Left lung (tissue), 14 donors: ENCODE measurements at regions of chr15 and their contacts with region 1.

Region 1: GRCh38 chr15:83248151-83249029 is 36.1 kb downstream of the BNC1 start:
- DNase-seq: peak in 2 of 4 donors; percentile 56 to 67
- ATAC-seq: peak; percentile 84
- H3K4me3 ChIP-seq: no peak overlapping the region
- H3K27ac ChIP-seq: no peak overlapping the region
- H3K4me1 ChIP-seq: no peaks in the 10 kb centered on the region
- H3K27me3 ChIP-seq: peaks cover 15 to 55% of the 10 kb centered on the region in 2 donors
- CTCF ChIP-seq: peak; percentile 86 to 89

Region 2: GRCh38 chr15:83443076-83443847 is 194.9 kb after region 1 on chr15:
- intact Hi-C with region 1: loop called in 1 of 2 experiments (anchors 5 kb)
- DNase-seq: no peak
- ATAC-seq: no peak
- H3K4me3 ChIP-seq: no peak overlapping the region
- H3K27ac ChIP-seq: no peak overlapping the region
- H3K4me1 ChIP-seq: peaks cover 7 to 17% of the 10 kb centered on the region in 2 donors
- H3K27me3 ChIP-seq: peaks cover 7 to 52% of the 10 kb centered on the region in 2 donors
- CTCF ChIP-seq: no peak

Region 3: DNA sequence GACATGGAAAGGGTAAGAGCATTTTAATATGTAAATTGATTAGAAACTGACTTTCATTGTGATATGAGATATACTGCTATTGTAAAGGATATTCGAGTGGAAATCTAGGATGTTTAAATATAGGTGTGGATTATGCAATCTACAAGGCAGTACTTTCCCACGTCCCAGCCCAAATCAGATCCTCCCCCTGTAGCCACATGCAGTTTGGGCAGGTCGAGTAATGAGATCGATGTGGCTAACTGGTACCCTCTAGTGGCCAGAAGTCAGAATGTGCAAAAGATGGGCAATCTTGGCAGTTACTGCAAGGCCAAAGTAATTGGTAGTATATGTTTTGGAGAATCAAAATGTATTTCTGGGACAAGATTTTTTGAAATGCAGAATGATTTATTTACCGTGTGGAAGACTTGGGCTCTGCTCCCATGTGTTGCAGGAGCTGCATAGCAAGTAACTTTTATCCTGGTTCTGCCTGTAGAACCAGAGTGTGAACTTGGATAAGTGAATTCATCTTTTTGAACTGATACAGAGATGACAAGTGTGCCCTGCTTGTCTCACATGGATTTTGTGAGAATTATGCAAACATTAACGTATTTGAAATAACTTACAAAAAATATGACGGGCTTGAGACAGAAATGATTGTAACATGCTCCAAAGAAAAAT is 311.0 kb after region 1 on chr15:
- intact Hi-C with region 1: loop called in 1 of 2 experiments (anchors 10 kb)
- DNase-seq: peak in 2 of 4 donors; percentile 46 to 74
- ATAC-seq: peak; percentile 96
- H3K4me3 ChIP-seq: no peak overlapping the region
- H3K27ac ChIP-seq: no peak overlapping the region
- H3K4me1 ChIP-seq: no peaks in the 10 kb centered on the region
- H3K27me3 ChIP-seq: peaks cover 0 to 2% of the 10 kb centered on the region in 2 donors
- CTCF ChIP-seq: peak; percentile 64 to 75